H1 (cell line): ENCODE measurements at regions of chr6 and their contacts with region 1.

Region 1: GRCh38 chr6:78526438-78526837 is 340.9 kb upstream of the IRAK1BP1 start:
- DNase-seq: no peak
- H3K4me3 ChIP-seq: no peak overlapping the region
- H3K27ac ChIP-seq: no peak overlapping the region
- H3K4me1 ChIP-seq: no peaks in the 10 kb centered on the region
- H3K27me3 ChIP-seq: no peaks in the 10 kb centered on the region
- CTCF ChIP-seq: peak in 1 of 3 experiments; percentile 4; a peak in 2 of 4 replicates
- EP300 ChIP-seq: no peak
- POLR2A ChIP-seq: no peak
- RAD21 ChIP-seq: peak; percentile 27 to 40; a peak in 3 of 4 replicates

Region 2: DNA sequence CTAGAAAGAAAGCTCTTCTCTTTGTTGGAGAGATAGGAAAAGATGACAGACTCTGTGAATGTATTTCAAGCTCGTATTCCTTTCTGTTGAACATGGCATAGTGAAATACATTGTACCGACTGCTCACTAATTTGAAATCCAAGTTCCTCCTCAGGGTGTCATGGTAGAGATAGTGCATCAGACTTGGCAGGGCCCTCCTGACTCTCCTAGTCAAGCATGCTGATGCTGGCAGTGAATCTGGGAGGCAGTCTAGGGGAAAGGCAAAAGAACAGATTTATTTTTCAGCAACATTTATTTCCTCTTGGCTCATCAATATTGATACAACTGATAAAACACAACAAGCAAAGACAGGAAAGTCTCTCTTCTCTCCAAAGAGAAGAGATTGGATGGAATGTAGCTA is 15.4 kb before region 1 on chr6:
- CTCF ChIA-PET with region 1: interaction called, 11 read pairs
- POLR2A ChIA-PET with region 1: no interaction called
- DNase-seq: no peak
- H3K4me3 ChIP-seq: no peak overlapping the region
- H3K27ac ChIP-seq: no peak overlapping the region
- H3K4me1 ChIP-seq: no peaks in the 10 kb centered on the region
- H3K27me3 ChIP-seq: no peaks in the 10 kb centered on the region
- CTCF ChIP-seq: no peak
- EP300 ChIP-seq: no peak
- POLR2A ChIP-seq: no peak
- RAD21 ChIP-seq: no peak

Region 3: GRCh38 chr6:78670802-78671201 is 144.4 kb after region 1 on chr6:
- CTCF ChIA-PET with region 1: no interaction called
- POLR2A ChIA-PET with region 1: no interaction called
- DNase-seq: no peak
- H3K4me3 ChIP-seq: no peak overlapping the region
- H3K27ac ChIP-seq: no peak overlapping the region
- H3K4me1 ChIP-seq: peaks cover 0 to 9% (median 1%) of the 10 kb centered on the region in 4 experiments; a peak in 2 of 7 replicates
- H3K27me3 ChIP-seq: no peaks in the 10 kb centered on the region
- CTCF ChIP-seq: no peak
- EP300 ChIP-seq: no peak
- POLR2A ChIP-seq: no peak
- RAD21 ChIP-seq: no peak